ENCODE measurements at regions of chr2 and their contacts with region 1.

Region 1: GRCh38 chr2:25620077-25620476 is 53.3 kb downstream of the DTNB start:
- DNase-seq: no peak
- H3K4me3 ChIP-seq: no peak overlapping the region
- H3K27ac ChIP-seq: peak overlapping the region in 2 of 59 donors; percentile 19 to 30
- H3K27me3 ChIP-seq: no peaks in the 10 kb centered on the region
- CTCF ChIP-seq: no peak

Region 2: DNA sequence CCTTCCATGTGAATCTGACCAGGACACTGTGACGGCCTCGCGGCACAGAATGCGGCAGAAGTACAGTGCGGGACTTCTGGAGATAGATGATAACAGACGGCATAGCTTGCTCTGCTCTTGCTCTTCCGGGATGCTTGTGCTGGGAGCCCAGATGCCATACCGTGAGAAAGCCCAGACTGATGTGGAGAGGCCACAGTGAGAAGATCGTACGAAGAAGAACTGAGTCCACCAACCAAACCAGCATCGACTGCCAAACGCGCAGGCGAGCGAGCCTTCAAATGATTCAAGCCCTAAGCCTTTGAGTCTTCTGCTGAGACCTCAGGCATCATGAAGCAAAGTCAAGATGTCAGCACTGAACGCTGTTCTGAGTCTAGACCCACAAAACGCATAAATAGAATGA is 19.6 kb after region 1 on chr2:
- intact Hi-C with region 1: loop called in 1 of 2 experiments (anchors 1 kb)
- DNase-seq: no peak
- H3K4me3 ChIP-seq: no peak overlapping the region
- H3K27ac ChIP-seq: no peak overlapping the region
- H3K27me3 ChIP-seq: no peaks in the 10 kb centered on the region
- CTCF ChIP-seq: no peak